Activated naive CD4-positive, alpha-beta T cell treated with anti-CD3 and anti-CD28 coated beads for 36 hours (primary cell): ENCODE measurements at regions of chr3 and their contacts with region 1.

Region 1: DNA sequence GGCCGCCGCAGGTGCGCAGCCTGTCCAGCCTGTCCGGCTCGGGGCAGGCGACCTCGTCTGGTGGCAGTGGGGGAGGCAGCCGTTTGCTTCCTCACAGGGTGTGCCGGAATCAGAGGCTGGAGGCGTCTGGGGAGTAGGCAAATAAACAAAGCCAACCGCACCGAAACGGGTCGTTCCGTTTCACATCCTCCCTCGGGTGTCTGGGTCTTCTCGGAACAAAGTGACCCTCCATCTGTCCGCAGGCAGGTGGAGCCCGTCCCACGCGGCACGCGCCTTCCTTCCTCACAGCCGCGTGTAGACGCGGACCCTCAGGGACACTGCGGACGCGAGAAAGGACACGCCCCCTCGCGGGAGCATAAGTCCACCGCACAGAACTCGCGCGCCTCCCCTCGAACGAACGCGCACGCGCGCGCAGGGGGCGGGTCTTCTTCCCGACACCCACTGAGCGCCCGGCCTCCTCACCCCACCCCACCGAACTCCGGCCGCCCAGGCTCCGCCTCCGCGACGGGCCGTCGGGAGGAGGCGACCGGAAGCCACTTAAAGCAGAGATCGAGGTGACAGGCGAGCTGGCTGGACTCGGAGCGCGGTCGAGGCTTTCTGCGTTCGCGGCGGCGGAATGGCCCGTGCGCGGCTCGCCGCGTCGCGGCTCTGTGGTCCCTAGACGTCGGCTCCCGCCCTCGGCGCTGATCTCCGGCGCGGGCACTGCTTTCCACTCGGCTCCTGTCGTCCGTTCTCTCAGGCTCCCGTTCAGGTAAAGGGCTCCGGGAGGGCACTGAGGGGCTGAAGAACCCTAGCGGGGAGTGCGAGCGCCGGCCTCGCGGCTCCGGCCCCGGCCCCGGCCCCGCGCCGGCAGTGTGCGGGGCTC is at the start of gene TIPARP:
- DNase-seq: peak; percentile 97
- H3K4me3 Mint-ChIP-seq: peak within 1 kb of the TSS; percentile 93
- H3K27ac Mint-ChIP-seq: peak within 1 kb of the TSS; percentile 88
- H3K4me1 Mint-ChIP-seq: peaks cover 40% of the 10 kb centered on the region
- H3K27me3 Mint-ChIP-seq: no peaks in the 10 kb centered on the region
- total RNA-seq, gene TIPARP: 15.7 to 17.1 TPM

Region 2: DNA sequence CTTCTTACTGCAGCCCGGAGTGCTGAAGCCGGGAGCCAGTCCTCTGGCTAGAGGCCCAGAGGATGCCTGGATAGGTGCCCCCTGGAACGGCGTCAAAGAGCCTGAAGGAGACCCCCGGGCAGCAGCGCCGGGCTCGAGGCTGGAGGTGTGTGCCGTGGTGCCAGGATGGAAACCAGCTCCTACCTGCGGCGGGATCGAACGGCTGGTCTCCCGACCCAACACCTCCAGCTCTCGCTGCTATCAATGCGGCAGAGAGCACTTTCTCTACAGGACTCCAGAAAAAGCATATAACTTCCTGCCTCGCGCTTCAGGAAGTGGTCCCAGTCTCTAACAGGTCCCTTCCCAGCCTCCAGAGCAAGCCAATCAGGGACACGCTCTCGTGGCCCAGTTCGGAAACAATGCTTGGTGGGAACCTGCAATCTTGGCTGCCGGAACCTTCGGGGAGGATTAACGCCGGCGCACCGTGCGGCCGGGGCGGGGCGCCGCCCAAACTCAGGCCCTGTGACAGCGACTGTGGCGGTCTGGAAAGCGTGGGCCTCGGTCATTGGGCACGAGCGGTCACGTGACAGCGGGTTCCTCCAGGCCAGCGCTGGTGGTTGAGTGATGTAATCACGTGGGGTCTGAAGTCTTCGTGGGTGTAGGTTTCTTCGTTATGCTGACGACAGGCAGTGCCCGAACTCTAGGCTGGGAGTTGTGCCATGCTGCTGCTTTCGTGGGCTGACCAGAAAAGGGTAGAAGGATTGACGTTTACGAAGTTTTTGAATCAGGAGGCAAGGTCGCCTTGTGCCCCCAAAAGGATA is 819.9 kb before region 1 on chr3 and contains the start of gene SLC33A1:
- CTCF ChIA-PET with region 1: no interaction called
- intact Hi-C with region 1: loop called (anchors 10 kb)
- DNase-seq: peak; percentile 99
- H3K4me3 Mint-ChIP-seq: peak within 1 kb of the TSS; percentile 98
- H3K27ac Mint-ChIP-seq: peak within 1 kb of the TSS; percentile 99
- H3K4me1 Mint-ChIP-seq: peaks cover 28% of the 10 kb centered on the region
- H3K27me3 Mint-ChIP-seq: no peaks in the 10 kb centered on the region
- total RNA-seq, gene SLC33A1: 14.7 to 15.2 TPM

Region 3: DNA sequence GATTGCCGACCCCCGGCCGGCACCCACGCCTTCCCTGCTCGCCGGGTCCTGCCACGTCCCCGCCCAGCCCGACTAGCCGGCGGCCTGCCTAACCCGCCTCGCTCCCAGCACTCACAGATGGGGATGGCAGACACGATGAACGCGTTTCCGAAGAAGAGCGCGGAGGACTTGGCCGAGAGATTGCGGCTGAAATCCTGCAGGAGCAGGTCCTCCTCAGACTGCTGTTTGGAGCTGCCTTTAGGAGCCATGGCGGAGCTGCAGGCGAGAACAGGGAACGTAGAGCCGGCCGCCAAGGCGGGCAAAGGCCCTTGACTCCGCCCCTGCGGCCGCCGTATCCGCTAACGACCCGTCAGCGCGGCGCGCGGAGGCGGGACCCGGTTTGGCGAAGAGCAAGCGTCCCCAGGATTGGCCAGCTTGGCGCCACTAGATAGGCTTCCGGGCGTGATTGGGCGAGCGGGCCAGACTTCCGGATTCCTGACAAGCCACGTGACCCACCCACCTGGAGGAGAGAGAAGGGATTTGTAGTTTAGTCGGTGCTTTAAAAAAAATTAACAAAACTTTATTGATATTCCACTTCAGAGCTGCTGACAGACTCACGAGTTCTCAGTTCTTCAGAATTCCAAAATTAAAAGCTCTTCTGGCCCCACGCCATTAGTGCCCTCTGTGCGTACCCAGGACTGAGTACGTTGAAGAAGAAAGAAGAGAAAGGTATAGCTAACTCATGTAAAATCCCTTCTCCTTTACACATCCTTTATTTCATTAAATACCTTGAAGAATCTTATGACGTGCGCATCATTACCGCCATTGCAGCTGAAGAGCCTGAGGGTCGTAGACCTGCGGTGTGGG is 119.2 kb before region 1 on chr3 and contains the start of gene SSR3:
- CTCF ChIA-PET with region 1: interaction called, 7 read pairs
- intact Hi-C with region 1: loop called (anchors 1 kb)
- DNase-seq: peak; percentile 99
- H3K4me3 Mint-ChIP-seq: peak within 1 kb of the TSS; percentile 90
- H3K27ac Mint-ChIP-seq: peak within 1 kb of the TSS; percentile 86
- H3K4me1 Mint-ChIP-seq: peaks cover 40% of the 10 kb centered on the region
- H3K27me3 Mint-ChIP-seq: no peaks in the 10 kb centered on the region
- total RNA-seq, gene SSR3: 128 to 138 TPM

Region 4: GRCh38 chr3:156685198-156685597 is 10.9 kb after region 1 on chr3:
- CTCF ChIA-PET with region 1: interaction called, 4 read pairs
- intact Hi-C with region 1: loop called (anchors 1 kb)
- DNase-seq: no peak
- H3K4me3 Mint-ChIP-seq: no peak overlapping the region
- H3K27ac Mint-ChIP-seq: no peak overlapping the region
- H3K4me1 Mint-ChIP-seq: peaks cover 65% of the 10 kb centered on the region
- H3K27me3 Mint-ChIP-seq: no peaks in the 10 kb centered on the region

Region 5: GRCh38 chr3:157081681-157082210 is 407.5 kb after region 1 on chr3:
- CTCF ChIA-PET with region 1: interaction called, 8 read pairs
- intact Hi-C with region 1: loop called (anchors 1 kb)
- DNase-seq: peak; percentile 86
- H3K4me3 Mint-ChIP-seq: no peak overlapping the region
- H3K27ac Mint-ChIP-seq: no peak overlapping the region
- H3K4me1 Mint-ChIP-seq: peaks cover 9% of the 10 kb centered on the region
- H3K27me3 Mint-ChIP-seq: no peaks in the 10 kb centered on the region

Region 6: DNA sequence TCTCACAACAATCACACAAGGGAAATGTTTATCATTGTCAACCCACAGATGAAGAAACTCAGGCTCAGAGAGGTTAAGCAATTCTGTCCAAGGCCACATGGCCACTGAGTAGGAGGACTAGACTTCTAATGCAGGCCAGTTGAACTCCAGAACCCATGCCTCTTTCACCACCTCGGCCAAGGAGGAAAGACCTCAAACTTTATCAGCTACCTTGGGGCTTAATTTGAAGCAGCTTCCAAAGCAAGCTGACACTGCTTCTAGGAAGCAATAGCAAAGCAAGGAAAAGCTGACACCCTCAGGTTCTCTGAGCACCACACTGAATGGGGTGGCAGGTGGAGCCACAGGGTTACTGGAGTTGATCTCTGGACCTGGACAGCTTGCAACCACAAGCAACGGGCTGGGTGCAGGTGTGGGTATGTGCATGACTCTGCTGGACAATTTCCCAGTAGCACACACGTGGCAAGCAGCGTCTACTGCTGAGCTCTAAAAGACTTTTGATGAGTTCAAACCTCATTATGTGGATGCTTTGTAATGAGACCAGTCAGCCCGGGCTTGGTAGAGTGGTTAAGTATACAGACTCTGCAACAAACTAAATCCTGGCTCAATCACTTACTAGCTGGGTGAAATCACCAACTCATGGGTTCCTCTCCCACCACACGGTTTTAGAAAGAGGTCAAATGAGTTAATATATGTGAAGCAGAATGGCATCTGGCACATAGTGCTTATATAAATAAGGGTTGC is 462.5 kb after region 1 on chr3:
- CTCF ChIA-PET with region 1: interaction called, 8 read pairs
- intact Hi-C with region 1: loop called (anchors 1 kb)
- DNase-seq: no peak
- H3K4me3 Mint-ChIP-seq: no peak overlapping the region
- H3K27ac Mint-ChIP-seq: no peak overlapping the region
- H3K4me1 Mint-ChIP-seq: peaks cover 11% of the 10 kb centered on the region
- H3K27me3 Mint-ChIP-seq: no peaks in the 10 kb centered on the region

Region 7: GRCh38 chr3:157239082-157239704 is 564.9 kb after region 1 on chr3:
- CTCF ChIA-PET with region 1: no interaction called
- intact Hi-C with region 1: loop called (anchors 5 kb)
- DNase-seq: peak; percentile 88
- H3K4me3 Mint-ChIP-seq: no peak overlapping the region
- H3K27ac Mint-ChIP-seq: no peak overlapping the region
- H3K4me1 Mint-ChIP-seq: peaks cover 2% of the 10 kb centered on the region
- H3K27me3 Mint-ChIP-seq: no peaks in the 10 kb centered on the region